ENCODE measurements at regions of chr4 and their contacts with region 1.

Region 1: GRCh38 chr4:82367438-82368097 is 6.2 kb downstream of the HNRNPD start:
- DNase-seq: no peak
- H3K4me3 Mint-ChIP-seq: no peak overlapping the region
- H3K27ac Mint-ChIP-seq: peak overlapping the region; percentile 60
- H3K4me1 Mint-ChIP-seq: peaks cover 78% of the 10 kb centered on the region
- H3K27me3 Mint-ChIP-seq: no peaks in the 10 kb centered on the region

Region 2: DNA sequence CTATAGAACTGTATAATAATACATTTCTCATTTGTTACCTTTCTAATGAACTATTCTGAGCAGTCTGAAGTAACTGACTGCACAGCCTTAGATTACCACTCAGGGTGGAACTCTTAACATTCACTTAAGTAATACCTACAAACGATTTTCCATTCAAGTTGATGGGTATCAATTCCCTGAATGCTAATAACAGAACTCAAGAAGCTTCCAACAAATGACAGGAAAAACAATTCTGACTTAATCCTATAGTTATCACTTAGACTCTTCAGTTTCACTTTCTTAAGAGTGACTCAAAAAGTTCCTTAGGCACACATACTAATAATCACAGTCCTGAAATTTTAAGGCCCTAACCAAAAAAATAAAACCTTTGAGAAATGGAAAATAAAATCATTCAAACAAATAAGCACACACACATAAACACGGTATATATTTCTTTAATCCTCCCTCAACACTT is 14.6 kb before region 1 on chr4:
- CTCF ChIA-PET with region 1: interaction called, 3 read pairs
- POLR2A ChIA-PET with region 1: interaction called, 15 read pairs
- DNase-seq: no peak
- H3K4me3 Mint-ChIP-seq: no peak overlapping the region
- H3K27ac Mint-ChIP-seq: peak overlapping the region; percentile 60
- H3K4me1 Mint-ChIP-seq: peaks cover 56% of the 10 kb centered on the region
- H3K27me3 Mint-ChIP-seq: no peaks in the 10 kb centered on the region

Region 3: GRCh38 chr4:82423245-82424054 is 55.9 kb after region 1 on chr4:
- CTCF ChIA-PET with region 1: interaction called, 38 read pairs
- POLR2A ChIA-PET with region 1: interaction called, 313 read pairs
- DNase-seq: no peak
- H3K4me3 Mint-ChIP-seq: no peak overlapping the region
- H3K27ac Mint-ChIP-seq: no peak overlapping the region
- H3K4me1 Mint-ChIP-seq: peaks cover 38% of the 10 kb centered on the region
- H3K27me3 Mint-ChIP-seq: no peaks in the 10 kb centered on the region

Region 4: GRCh38 chr4:82462415-82462831 is 94.9 kb after region 1 on chr4:
- CTCF ChIA-PET with region 1: no interaction called
- POLR2A ChIA-PET with region 1: no interaction called
- DNase-seq: peak; percentile 84
- H3K4me3 Mint-ChIP-seq: no peak overlapping the region
- H3K27ac Mint-ChIP-seq: no peak overlapping the region
- H3K4me1 Mint-ChIP-seq: no peaks in the 10 kb centered on the region
- H3K27me3 Mint-ChIP-seq: no peaks in the 10 kb centered on the region

Region 5: GRCh38 chr4:82661181-82661992 is 293.8 kb after region 1 on chr4:
- CTCF ChIA-PET with region 1: no interaction called
- POLR2A ChIA-PET with region 1: no interaction called
- DNase-seq: no peak
- H3K4me3 Mint-ChIP-seq: no peak overlapping the region
- H3K27ac Mint-ChIP-seq: no peak overlapping the region
- H3K4me1 Mint-ChIP-seq: no peaks in the 10 kb centered on the region
- H3K27me3 Mint-ChIP-seq: peaks cover 28% of the 10 kb centered on the region

Measured in activated CD4-positive, alpha-beta memory T cell treated with anti-CD3 and anti-CD28 coated beads, Interleukin-2, amount 10 ng/mL, durations not matched to agents 7 days and 5 days (primary cell).